Dendritic cell treated with granulocyte-macrophage colony-stimulating factor and Interleukin-4, amounts not matched to agents 40 ng/mL and 50 ng/mL, for 4 days (primary cell): ENCODE measurements at regions of chr10 and their contacts with region 1.

Region 1: GRCh38 chr10:2978111-2978510 is 89.2 kb upstream of the PFKP start:
- H3K4me3 Mint-ChIP-seq: no peak overlapping the region
- H3K27ac Mint-ChIP-seq: peak overlapping the region; percentile 83
- H3K4me1 Mint-ChIP-seq: peaks cover 60% of the 10 kb centered on the region
- H3K27me3 Mint-ChIP-seq: peaks cover 1% of the 10 kb centered on the region

Region 2: DNA sequence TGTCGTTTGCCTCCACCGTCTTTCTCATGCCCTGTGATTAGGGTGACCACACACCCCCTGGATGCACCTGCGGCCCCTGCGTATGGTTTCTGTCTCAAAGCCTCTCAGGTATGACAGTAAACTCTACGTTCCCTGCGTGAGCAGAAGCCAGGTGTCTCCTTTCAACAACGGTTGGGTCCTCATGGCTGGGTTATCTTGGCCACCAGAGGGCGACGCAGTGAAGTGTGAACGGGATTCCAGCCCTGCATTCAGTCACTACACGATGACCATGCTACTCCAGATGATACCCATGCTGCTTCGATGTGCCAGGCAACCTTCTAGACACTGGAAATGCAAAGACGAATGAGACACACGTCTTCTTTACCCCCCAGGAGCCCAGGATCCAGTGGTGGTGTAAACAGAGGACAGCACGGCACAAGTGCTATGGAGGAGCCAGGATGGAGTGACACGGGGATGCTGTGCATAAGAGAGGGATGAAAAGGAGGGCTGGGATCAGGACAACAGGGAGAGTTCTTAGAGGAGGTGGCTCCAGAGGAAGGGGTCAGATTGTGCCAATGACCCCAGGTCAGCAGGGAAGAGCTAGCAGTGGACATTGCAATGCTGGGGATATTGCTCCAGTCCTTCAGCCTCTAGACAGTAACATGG is 138.9 kb before region 1 on chr10:
- intact Hi-C with region 1: loop called (anchors 1 kb)
- H3K4me3 Mint-ChIP-seq: no peak overlapping the region
- H3K27ac Mint-ChIP-seq: no peak overlapping the region
- H3K4me1 Mint-ChIP-seq: peaks cover 8% of the 10 kb centered on the region
- H3K27me3 Mint-ChIP-seq: peaks cover 14% of the 10 kb centered on the region

Region 3: DNA sequence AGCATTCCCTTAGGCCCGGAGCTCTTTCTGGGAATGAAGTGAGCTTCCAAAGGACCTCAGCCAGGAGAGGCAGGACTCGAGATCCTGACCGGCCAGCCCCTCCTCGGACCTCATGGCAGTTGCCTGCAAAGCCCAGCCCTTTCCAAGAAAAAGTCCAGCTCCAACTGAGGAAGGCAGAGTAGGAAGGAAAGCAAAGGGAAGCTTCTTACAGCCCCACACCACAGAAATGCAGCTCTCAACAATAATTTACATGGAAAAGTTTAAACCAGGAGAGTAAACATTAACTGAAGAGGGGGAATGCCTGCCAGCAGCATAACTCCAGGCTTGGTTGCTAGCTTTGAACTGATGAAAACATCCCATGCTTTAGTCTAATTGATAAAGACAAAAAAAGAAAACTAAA is 64.6 kb before region 1 on chr10:
- intact Hi-C with region 1: no loop called
- H3K4me3 Mint-ChIP-seq: no peak overlapping the region
- H3K27ac Mint-ChIP-seq: no peak overlapping the region
- H3K4me1 Mint-ChIP-seq: peaks cover 5% of the 10 kb centered on the region
- H3K27me3 Mint-ChIP-seq: peaks cover 4% of the 10 kb centered on the region

Region 4: GRCh38 chr10:2927958-2928840 is 49.9 kb before region 1 on chr10:
- intact Hi-C with region 1: loop called (anchors 2 kb)
- H3K4me3 Mint-ChIP-seq: no peak overlapping the region
- H3K27ac Mint-ChIP-seq: no peak overlapping the region
- H3K4me1 Mint-ChIP-seq: peaks cover 52% of the 10 kb centered on the region
- H3K27me3 Mint-ChIP-seq: peaks cover 17% of the 10 kb centered on the region

Region 5: DNA sequence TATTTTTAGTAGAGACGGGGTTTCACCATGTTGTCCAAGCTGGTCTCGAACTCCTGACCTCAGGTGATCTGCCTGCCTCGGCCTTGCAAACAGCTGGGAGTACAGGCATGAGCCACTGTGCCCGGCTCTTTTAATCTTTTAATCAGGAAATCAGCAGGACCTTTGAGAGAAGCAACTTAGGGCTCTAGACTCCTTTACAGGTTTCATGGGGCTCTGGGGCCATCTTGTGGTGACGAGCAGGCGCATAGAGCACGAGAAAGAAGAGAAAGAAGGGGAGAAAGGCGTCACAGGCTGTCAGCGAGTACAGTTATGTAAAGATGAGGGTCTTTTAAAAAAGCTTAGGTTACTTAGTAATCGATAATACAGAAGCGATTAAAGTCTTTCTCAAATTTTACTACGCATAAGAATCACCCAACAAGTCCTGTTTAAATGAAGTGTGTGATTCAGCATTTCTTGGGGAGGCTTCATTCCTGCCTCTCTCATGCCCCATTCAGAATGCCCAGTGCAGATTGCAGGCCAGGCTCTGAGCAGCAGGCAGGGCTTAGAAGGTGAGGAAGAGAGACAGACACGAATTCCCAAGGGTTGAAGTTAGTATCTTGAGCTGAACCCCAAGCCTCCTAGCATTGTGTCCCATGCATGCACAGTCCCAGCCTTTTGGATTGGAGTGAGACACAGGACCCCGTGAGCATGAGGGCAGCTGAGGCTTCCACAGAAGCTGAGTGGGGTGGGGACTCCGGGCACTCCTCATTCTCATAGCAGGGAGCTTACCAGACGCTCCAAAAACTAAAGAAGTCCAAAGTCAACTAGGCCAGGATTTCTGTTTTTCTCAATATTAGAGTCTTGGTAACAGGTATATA is 65.6 kb after region 1 on chr10:
- intact Hi-C with region 1: loop called (anchors 1 kb)
- H3K4me3 Mint-ChIP-seq: no peak overlapping the region
- H3K27ac Mint-ChIP-seq: peak overlapping the region; percentile 73
- H3K4me1 Mint-ChIP-seq: peaks cover 74% of the 10 kb centered on the region
- H3K27me3 Mint-ChIP-seq: peaks cover 17% of the 10 kb centered on the region